OCI-LY7 (cell line): ENCODE measurements at regions of chr2 and their contacts with region 1.

Region 1: GRCh38 chr2:68031542-68032160 is 31.2 kb downstream of the C1D start:
- DNase-seq: peak; percentile 70
- H3K4me3 ChIP-seq: no peak overlapping the region
- H3K27ac ChIP-seq: no peak overlapping the region
- H3K4me1 ChIP-seq: no peaks in the 10 kb centered on the region
- CTCF ChIP-seq: peak; percentile 93

Region 2: GRCh38 chr2:67846370-67847070 is 185.1 kb before region 1 on chr2:
- CTCF ChIA-PET with region 1: no interaction called
- POLR2A ChIA-PET with region 1: no interaction called
- intact Hi-C with region 1: loop called (anchors 2 kb)
- DNase-seq: peak; percentile 68
- H3K4me3 ChIP-seq: no peak overlapping the region
- H3K27ac ChIP-seq: no peak overlapping the region
- H3K4me1 ChIP-seq: no peaks in the 10 kb centered on the region
- CTCF ChIP-seq: peak; percentile 91

Region 3: GRCh38 chr2:68151037-68151436 is 119.4 kb after region 1 on chr2:
- CTCF ChIA-PET with region 1: no interaction called
- POLR2A ChIA-PET with region 1: no interaction called
- intact Hi-C with region 1: no loop called
- DNase-seq: peak; percentile 17
- H3K4me3 ChIP-seq: peak overlapping the region; percentile 5
- H3K27ac ChIP-seq: peak overlapping the region; percentile 4
- H3K4me1 ChIP-seq: peaks cover 31% of the 10 kb centered on the region
- CTCF ChIP-seq: no peak

Region 4: GRCh38 chr2:68295516-68295915 is 263.9 kb after region 1 on chr2:
- CTCF ChIA-PET with region 1: no interaction called
- POLR2A ChIA-PET with region 1: no interaction called
- intact Hi-C with region 1: loop called (anchors 5 kb)
- DNase-seq: peak; percentile 56
- H3K4me3 ChIP-seq: no peak overlapping the region
- H3K27ac ChIP-seq: no peak overlapping the region
- H3K4me1 ChIP-seq: peaks cover 24% of the 10 kb centered on the region
- CTCF ChIP-seq: no peak